Activated naive CD4-positive, alpha-beta T cell treated with anti-CD3 and anti-CD28 coated beads for 36 hours (primary cell): ENCODE measurements at regions of chr12 and their contacts with region 1.

Region 1: DNA sequence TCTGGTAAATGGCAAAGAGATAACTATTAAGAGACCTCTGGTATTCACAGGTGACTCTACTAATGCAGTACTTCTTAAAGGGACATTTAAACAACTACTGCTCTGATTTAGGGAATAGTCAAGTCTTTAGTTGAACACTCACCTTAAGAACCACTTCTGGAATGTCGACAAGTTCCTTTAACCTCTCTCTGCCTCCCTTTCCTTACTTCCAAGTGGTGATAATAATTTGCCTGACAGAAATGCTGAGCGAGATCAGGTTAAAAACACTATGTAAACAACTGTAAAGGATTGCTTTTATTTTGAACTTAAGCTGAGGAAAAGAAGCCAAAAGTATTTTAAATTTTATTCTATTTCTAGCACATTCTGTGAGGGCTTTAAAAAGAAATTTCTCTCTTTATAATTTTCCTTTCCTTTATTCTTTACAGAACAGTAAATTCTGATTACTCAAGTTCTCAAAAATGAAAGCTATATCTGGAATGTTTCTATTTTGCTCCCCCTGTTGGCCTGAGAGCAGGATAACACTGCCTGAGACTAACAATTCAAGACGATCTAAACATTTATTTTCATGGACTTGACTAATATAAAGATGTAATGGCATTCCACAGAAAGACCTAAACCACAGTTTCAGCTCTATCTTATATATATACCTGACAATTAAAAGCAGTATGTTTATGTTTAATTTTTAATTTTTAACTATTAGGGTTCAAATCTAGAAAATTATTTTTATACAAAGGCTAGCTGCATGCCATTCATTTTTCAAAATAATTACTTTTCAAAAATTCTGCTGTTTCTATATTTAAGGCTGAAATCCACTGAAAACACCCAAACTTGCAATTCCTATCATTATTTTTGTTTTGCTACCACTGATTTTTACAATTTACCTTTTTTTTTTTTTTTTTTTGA is 29.2 kb downstream of the ZCCHC8 start:
- DNase-seq: peak; percentile 24
- H3K4me3 Mint-ChIP-seq: no peak overlapping the region
- H3K27ac Mint-ChIP-seq: no peak overlapping the region
- H3K4me1 Mint-ChIP-seq: peaks cover 23% of the 10 kb centered on the region
- H3K27me3 Mint-ChIP-seq: no peaks in the 10 kb centered on the region

Region 2: DNA sequence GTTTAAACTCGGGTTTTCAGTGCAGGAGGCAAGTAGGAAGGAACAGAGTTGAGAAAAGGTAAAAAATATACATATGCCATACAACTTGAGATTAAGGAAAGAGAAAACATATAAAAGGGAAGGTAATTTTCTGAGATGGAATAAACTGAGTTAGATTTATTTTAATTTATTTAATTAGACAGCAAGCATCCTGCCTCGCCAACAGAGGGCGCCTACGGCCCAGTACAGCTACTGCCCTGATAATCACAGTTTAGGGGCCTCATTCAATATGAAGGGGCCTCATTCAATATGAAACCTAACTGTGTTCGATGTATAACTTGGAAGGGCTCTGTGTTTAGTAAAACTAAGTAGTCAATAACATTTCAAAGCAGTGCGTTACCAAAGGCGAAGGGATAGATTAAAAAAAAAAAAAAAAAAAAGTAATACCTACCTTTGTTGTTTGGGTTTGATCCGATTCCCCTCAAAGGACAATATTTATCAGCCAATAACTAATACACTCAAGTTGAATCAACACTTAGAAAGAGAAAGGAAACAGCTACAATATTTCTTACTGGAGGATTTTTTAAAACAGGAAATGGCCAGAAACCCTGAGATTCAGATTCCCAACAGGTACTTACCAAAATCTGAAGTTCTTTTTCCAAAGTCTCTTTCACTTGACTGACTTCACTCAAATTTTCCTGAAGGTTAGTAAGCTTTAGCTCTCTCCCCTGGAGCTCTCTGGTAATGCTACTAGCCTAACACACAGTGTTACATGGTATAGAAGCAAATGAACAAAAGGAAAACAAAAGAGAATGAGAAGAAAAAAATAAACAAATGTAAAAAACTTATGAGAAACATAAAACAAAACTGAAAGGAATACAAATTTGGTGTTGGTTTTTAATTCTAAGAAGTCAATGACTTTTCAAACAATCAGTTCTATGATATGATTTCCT is 135.3 kb before region 1 on chr12:
- CTCF ChIA-PET with region 1: interaction called, 13 read pairs
- intact Hi-C with region 1: loop called (anchors 1 kb)
- DNase-seq: peak; percentile 63
- H3K4me3 Mint-ChIP-seq: no peak overlapping the region
- H3K27ac Mint-ChIP-seq: peak overlapping the region; percentile 32
- H3K4me1 Mint-ChIP-seq: peaks cover 11% of the 10 kb centered on the region
- H3K27me3 Mint-ChIP-seq: no peaks in the 10 kb centered on the region

Region 3: DNA sequence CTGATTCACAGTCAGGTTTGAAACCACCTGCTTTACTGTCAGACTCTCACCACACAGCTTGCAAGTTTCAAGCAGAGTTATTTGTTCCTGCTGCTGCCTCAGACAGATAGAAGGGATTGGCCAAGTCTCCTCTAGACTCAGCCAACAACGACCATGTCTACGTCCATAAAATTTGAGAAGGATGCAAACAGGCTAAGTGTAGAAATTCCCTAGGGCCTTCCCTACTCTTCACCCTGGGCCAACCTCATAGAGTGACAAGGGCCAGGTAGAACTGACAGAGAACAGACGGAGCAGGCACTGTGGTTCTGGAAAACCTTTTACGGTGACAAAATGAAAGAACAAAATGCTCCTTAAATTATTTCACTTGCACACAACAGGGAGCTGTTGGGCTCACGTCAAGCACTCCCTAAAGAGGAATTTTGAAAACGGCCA is 88.6 kb before region 1 on chr12:
- CTCF ChIA-PET with region 1: no interaction called
- intact Hi-C with region 1: no loop called
- DNase-seq: no peak
- H3K4me3 Mint-ChIP-seq: no peak overlapping the region
- H3K27ac Mint-ChIP-seq: no peak overlapping the region
- H3K4me1 Mint-ChIP-seq: peaks cover 6% of the 10 kb centered on the region
- H3K27me3 Mint-ChIP-seq: no peaks in the 10 kb centered on the region

Region 4: DNA sequence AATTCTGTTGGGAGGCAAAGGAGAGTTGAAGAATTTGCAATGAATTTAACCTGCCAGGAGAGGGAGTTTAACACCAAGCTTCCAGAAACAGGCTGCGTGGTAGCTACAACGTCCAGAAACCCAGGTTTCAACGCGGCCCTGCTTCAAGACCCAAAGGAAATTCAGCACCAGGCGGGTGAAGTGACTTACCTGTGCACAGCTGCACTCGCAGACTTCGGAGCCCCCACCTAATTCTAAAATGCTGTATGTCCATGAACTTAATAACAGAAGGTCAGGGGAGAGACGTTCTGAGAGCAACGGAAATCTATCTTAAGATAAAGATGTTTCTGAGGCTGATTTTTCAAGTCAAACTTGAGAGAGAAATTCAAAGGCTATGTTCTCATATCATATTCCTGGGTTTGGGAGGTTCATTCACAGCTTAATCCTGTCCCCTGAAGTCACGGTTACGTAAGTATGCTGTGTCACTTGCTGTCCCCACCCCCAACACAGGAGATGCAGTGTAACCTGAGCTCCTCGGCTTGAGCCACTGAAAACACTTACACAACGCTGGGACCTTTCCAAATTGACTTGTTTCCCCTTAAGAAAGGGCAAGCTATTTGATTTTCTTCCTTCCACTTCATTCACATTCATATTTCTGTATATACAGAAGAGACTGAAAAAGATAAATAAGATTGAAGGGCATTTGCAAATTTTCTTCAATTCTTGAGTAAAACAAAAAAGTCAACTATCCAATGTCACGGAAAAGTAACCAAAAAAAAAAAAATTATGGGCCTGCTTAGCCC is 71.8 kb before region 1 on chr12:
- CTCF ChIA-PET with region 1: interaction called, 113 read pairs
- intact Hi-C with region 1: loop called (anchors 1 kb)
- DNase-seq: peak; percentile 70
- H3K4me3 Mint-ChIP-seq: peak overlapping the region; percentile 51
- H3K27ac Mint-ChIP-seq: peak overlapping the region; percentile 81
- H3K4me1 Mint-ChIP-seq: peaks cover 44% of the 10 kb centered on the region
- H3K27me3 Mint-ChIP-seq: no peaks in the 10 kb centered on the region

Region 5: DNA sequence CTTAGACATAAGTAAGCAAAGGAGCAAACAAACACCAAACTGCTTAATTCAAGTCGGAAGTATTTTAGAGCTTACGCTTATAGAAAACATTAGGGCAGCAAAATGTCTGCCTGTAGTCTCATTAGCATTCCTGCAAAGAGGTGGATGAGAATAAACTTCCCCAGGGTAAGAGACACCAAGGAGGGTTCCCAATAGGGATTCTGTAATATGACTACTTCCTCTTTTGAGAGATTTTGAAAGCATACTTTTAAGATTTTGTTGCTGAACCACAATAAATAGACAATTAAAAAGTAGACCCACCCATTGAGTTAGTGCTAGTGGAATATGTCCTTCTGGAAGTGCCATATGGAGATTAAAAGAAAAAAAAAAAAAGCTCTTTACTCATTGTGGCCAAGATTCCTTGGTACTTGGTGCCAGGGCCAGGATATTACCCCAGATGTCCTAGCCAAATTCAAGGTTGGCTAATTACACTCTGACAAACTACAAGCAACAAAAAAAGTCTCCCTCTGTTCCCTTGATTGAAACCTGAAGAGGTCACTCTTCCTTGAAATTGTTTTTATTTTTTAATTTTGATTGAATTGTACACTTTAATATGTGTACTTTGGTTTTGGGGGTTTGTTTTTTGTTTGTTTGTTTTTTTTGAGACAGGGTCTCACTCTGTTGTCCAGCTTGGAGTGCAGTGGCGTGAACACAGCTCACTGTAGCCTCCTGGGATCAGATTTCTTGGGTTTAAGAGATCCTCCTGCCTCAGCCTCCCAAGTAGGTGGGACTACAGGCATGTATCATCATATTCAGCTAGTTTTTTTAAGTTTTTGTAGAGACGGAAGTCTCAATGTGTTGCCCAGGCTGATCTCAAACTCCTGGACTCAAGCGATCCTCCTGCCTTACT is 57.8 kb before region 1 on chr12:
- CTCF ChIA-PET with region 1: interaction called, 10 read pairs
- intact Hi-C with region 1: no loop called
- DNase-seq: no peak
- H3K4me3 Mint-ChIP-seq: peak overlapping the region; percentile 59
- H3K27ac Mint-ChIP-seq: peak overlapping the region; percentile 97
- H3K4me1 Mint-ChIP-seq: peaks cover 50% of the 10 kb centered on the region
- H3K27me3 Mint-ChIP-seq: no peaks in the 10 kb centered on the region

Region 6: DNA sequence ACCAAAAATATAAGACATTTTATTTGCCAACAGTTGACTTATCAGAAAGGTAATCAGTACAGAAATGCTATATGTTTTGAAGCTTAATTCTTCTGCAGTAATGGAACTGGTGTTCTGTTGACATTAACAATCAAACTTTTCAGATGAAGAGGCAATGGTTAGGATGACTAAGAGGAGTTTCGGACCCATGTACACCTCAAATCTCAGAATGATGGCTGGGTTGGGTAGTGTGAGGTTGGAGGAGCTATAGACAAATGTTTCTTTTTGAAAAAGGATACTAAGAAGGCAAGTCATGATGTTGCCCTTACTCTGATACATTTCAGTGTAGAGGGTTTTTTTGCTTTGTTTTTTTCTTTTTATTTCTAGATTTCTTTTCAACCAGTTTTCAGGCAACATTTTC is 122.3 kb after region 1 on chr12:
- CTCF ChIA-PET with region 1: no interaction called
- intact Hi-C with region 1: no loop called
- DNase-seq: no peak
- H3K4me3 Mint-ChIP-seq: no peak overlapping the region
- H3K27ac Mint-ChIP-seq: peak overlapping the region; percentile 28
- H3K4me1 Mint-ChIP-seq: peaks cover 3% of the 10 kb centered on the region
- H3K27me3 Mint-ChIP-seq: no peaks in the 10 kb centered on the region